OCI-LY7 (cell line): ENCODE measurements at regions of chr17 and their contacts with region 1.

Region 1: GRCh38 chr17:63954402-63955063 is 18.2 kb downstream of the SCN4A start:
- DNase-seq: peak; percentile 91
- H3K4me3 ChIP-seq: peak overlapping the region; percentile 44
- H3K27ac ChIP-seq: peak overlapping the region; percentile 89
- H3K4me1 ChIP-seq: peaks cover 44% of the 10 kb centered on the region
- CTCF ChIP-seq: peak; percentile 73

Region 2: DNA sequence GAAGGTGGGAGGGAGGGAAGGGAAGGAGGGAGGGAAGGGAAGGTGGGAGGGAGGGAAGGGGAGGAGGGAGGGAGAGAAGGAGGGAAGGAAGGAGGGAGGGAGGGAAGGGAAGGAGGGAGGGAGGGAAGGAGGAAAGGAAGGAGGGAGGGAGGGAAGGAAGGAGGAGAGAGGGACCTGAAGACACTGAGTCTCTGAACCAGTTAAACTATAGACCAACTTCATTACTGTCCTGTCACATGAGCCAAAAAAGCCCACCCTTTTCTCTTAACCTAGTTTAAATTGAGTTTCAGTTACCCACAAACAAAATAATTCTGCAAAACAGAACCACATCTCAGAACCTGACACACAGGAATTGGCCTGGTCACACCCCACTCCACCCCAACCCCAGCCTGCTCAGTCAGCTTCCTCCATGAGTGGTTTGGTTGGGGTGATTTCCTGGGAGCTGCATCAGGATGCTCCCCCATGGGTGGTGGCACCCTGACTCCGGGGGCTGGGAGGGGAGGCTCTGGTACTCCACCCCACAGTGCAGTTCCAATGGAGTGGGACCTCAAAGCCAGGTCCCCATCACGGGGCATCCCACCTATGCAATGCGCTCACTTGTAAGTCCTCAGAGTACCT is 38.9 kb after region 1 on chr17:
- CTCF ChIA-PET with region 1: interaction called, 6 read pairs
- POLR2A ChIA-PET with region 1: no interaction called
- intact Hi-C with region 1: loop called (anchors 2 kb)
- DNase-seq: no peak
- H3K4me3 ChIP-seq: no peak overlapping the region
- H3K27ac ChIP-seq: no peak overlapping the region
- H3K4me1 ChIP-seq: peaks cover 19% of the 10 kb centered on the region
- CTCF ChIP-seq: no peak

Region 3: GRCh38 chr17:64230795-64231408 is 276.4 kb after region 1 on chr17:
- CTCF ChIA-PET with region 1: no interaction called
- POLR2A ChIA-PET with region 1: no interaction called
- intact Hi-C with region 1: no loop called
- DNase-seq: no peak
- H3K4me3 ChIP-seq: no peak overlapping the region
- H3K27ac ChIP-seq: no peak overlapping the region
- H3K4me1 ChIP-seq: peaks cover 3% of the 10 kb centered on the region
- CTCF ChIP-seq: no peak